ENCODE measurements at regions of chr5 and their contacts with region 1.

Region 1: GRCh38 chr5:152142840-152143469 is 218.3 kb upstream of the GLRA1 start:
- DNase-seq: peak; percentile 30 to 77 (median 59)
- H3K4me3 ChIP-seq: no peak overlapping the region
- H3K27ac ChIP-seq: no peak overlapping the region
- H3K4me1 ChIP-seq: no peaks in the 10 kb centered on the region
- H3K27me3 ChIP-seq: no peaks in the 10 kb centered on the region
- CTCF ChIP-seq: peak; percentile 56 to 86 (median 72)
- POLR2A ChIP-seq: no peak

Region 2: DNA sequence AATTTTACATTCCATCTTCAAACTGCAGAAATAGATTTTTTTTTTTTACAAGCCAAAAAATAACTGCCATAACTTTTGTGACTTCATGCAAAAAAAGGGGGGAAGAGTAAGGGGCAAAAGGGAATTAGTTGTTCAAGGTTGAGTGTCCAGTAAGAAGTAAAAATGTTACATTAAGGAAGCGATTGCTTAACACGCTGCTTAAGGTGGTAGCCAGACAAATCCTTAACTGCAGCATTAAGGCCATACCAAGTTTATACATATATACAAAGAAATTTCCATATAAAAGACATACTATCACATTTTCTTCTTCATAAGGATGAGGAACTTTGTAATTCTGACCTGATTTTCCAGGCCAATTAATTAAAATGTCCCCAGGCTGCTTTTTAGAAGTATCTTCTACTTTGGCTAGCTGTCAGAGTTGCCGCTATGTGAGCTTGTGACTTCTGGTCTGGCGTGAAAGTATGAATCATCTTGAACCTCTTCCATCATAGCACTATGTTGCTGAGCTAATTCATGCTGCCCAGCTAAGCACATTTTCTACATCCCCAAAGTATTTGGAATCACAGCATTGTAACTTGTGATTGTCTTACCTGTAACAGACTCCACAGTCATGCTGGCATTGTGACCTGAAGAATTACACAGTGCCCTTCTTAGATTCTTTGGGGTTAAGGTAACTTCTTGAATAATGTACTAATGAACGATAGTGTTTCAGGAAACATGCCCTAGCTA is 331.2 kb before region 1 on chr5:
- intact Hi-C with region 1: loop called in 1 of 2 experiments (anchors 10 kb)
- DNase-seq: peak in 2 of 7 donors; percentile 28 to 43
- H3K4me3 ChIP-seq: no peak overlapping the region
- H3K27ac ChIP-seq: no peak overlapping the region
- H3K4me1 ChIP-seq: peaks cover 0 to 17% of the 10 kb centered on the region in 2 donors
- H3K27me3 ChIP-seq: no peaks in the 10 kb centered on the region
- CTCF ChIP-seq: no peak
- POLR2A ChIP-seq: no peak

Region 3: DNA sequence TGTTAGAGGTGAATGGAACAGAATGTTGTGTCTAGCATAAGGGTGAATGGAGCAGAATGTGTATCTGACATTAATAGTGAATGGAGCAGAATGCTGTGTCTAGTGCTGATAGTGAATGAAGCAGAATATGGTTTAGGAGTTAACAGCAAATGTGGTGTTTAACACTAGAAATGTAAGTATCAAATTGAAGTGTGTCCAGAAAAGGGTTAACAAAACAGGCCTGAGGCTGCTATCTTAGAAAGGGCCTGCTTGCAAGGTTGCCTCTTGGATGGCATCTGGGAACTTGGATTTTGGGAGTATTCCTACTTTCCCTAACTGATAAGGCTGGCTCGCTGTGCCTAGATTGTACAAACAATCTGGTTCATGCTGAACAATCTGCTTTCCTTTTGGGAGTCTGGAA is 295.1 kb before region 1 on chr5:
- intact Hi-C with region 1: no loop called
- DNase-seq: no peak
- H3K4me3 ChIP-seq: no peak overlapping the region
- H3K27ac ChIP-seq: no peak overlapping the region
- H3K4me1 ChIP-seq: no peaks in the 10 kb centered on the region
- H3K27me3 ChIP-seq: no peaks in the 10 kb centered on the region
- CTCF ChIP-seq: no peak
- POLR2A ChIP-seq: no peak

Measured in adrenal gland (tissue), 19 donors.